Activated T-helper 2 cell treated with anti-CD3 and anti-CD28 coated beads, Interferon-gamma antibody, Interleukin-2, Interleukin-4, amounts not matched to agents 10 μg/mL and 5 μg/mL and 100 μg/mL, durations not matched to agents 14 hours and 24 hours and 36 hours (primary cell): ENCODE measurements at regions of chr1 and their contacts with region 1.

Region 1: GRCh38 chr1:35443768-35444518 is 113.3 kb downstream of the KIAA0319L start:
- DNase-seq: no peak
- H3K4me3 Mint-ChIP-seq: no peak overlapping the region
- H3K27ac Mint-ChIP-seq: peak overlapping the region; percentile 23
- H3K4me1 Mint-ChIP-seq: peaks cover 20% of the 10 kb centered on the region
- H3K27me3 Mint-ChIP-seq: no peaks in the 10 kb centered on the region

Region 2: DNA sequence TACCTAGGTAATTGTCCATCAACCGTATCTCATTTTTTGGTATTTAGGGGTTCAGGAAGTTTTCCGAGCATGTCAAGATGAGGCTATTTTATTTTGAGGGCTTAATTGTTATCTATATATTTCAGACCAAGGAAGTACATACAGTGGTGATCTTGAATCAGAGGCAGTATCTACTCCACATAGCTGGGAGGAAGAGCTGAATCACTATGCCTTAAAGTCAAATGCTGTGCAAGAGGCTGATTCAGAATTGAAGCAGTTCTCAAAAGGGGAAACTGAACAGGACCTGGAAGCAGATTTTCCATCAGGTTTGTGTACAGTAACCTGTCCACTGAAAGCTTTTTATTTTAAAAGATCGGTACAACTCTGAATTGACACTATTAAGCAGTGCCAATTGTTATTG is 45.2 kb before region 1 on chr1:
- intact Hi-C with region 1: no loop called
- DNase-seq: no peak
- H3K4me3 Mint-ChIP-seq: no peak overlapping the region
- H3K27ac Mint-ChIP-seq: no peak overlapping the region
- H3K4me1 Mint-ChIP-seq: peaks cover 4% of the 10 kb centered on the region
- H3K27me3 Mint-ChIP-seq: no peaks in the 10 kb centered on the region

Region 3: DNA sequence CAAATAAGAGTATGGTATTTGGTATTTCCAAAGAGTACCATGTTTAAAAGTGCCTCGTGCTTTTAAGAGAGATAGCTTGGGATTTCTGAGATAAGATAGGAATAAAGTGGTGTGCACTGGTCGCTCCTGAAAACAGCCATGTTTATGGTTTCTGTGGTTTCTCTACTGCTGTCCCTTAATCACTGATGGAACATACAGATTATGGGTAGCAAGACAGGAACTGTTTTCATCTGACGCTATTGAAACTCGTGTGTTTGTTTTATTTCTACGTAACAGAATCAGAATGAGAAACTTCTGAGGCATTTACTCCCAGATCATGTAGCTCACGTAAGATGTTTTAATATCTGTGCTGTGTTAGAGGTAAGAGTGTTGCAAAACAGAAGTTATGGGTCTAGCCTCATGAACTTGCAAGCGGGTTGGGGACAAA is 12.8 kb before region 1 on chr1:
- intact Hi-C with region 1: loop called (anchors 1 kb)
- DNase-seq: no peak
- H3K4me3 Mint-ChIP-seq: no peak overlapping the region
- H3K27ac Mint-ChIP-seq: peak overlapping the region; percentile 91
- H3K4me1 Mint-ChIP-seq: peaks cover 23% of the 10 kb centered on the region
- H3K27me3 Mint-ChIP-seq: no peaks in the 10 kb centered on the region